Activated naive CD8-positive, alpha-beta T cell treated with anti-CD3 and anti-CD28 coated beads, Interleukin-2, amount 10 ng/mL, durations not matched to agents 7 days and 5 days (primary cell): ENCODE measurements at regions of chr17 and their contacts with region 1.

Region 1: GRCh38 chr17:16537130-16537458 is 31.9 kb downstream of the ZNF287 start:
- DNase-seq: no peak
- ATAC-seq: no peak
- H3K4me3 Mint-ChIP-seq: peak overlapping the region; percentile 98
- H3K27ac Mint-ChIP-seq: peak overlapping the region; percentile 13
- H3K4me1 Mint-ChIP-seq: peaks cover 11% of the 10 kb centered on the region
- H3K27me3 Mint-ChIP-seq: no peaks in the 10 kb centered on the region

Region 2: DNA sequence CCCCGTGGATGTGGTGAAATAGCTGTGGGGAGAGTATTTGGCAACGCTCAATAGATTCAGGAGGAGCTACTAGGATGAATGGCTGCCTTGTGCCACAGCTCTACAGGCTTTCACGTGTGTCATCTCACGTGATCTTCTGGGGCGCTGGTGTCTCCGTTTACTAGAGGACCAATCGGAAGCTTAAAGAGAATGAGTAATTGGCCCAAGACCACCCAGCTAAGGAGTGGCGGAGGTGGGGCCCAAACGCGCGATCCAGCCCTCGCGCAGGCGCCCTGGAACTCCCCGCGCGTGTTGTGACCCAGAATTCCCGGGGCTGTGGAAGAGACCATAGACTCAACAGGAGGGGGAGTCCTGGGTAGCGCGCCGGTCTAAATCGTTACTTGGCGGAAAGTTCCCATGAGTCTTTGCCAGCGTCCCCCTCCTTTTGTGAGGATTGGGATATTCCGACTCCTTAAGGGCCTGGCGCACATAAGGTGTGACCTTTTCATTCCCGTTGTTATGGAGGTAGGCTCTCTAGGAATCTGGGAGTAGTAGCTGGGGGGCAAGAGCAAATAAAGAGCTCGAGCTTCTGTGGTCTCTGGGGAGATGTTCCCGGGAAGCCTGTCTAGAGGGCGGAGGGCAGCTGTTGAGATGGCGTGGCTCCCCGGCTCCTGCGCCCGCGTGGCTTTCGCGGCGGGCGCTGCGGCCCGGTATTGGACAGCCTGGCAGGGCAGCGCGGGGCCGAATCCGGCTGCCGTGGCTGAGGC is 98.4 kb before region 1 on chr17:
- POLR2A ChIA-PET with region 1: interaction called, 14 read pairs
- DNase-seq: peak; percentile 91
- ATAC-seq: peak; percentile 91
- H3K4me3 Mint-ChIP-seq: peak overlapping the region; percentile 99
- H3K27ac Mint-ChIP-seq: peak overlapping the region; percentile 98
- H3K4me1 Mint-ChIP-seq: peaks cover 39% of the 10 kb centered on the region
- H3K27me3 Mint-ChIP-seq: no peaks in the 10 kb centered on the region

Region 3: GRCh38 chr17:16568541-16569357 is 31.7 kb after region 1 on chr17 and contains the start of gene ZNF287:
- POLR2A ChIA-PET with region 1: interaction called, 11 read pairs
- DNase-seq: peak; percentile 91
- ATAC-seq: peak; percentile 97
- H3K4me3 Mint-ChIP-seq: peak within 1 kb of the TSS; percentile 82
- H3K27ac Mint-ChIP-seq: peak within 1 kb of the TSS; percentile 23
- H3K4me1 Mint-ChIP-seq: peaks cover 7% of the 10 kb centered on the region
- H3K27me3 Mint-ChIP-seq: peaks cover 2% of the 10 kb centered on the region
- total RNA-seq, gene ZNF287: 9.7 to 13.0 TPM

Region 4: GRCh38 chr17:16589097-16589969 is 52.2 kb after region 1 on chr17:
- POLR2A ChIA-PET with region 1: interaction called, 11 read pairs
- DNase-seq: peak; percentile 95
- ATAC-seq: peak; percentile 86
- H3K4me3 Mint-ChIP-seq: peak overlapping the region; percentile 69
- H3K27ac Mint-ChIP-seq: peak overlapping the region; percentile 23
- H3K4me1 Mint-ChIP-seq: peaks cover 5% of the 10 kb centered on the region
- H3K27me3 Mint-ChIP-seq: peaks cover 57% of the 10 kb centered on the region

Region 5: DNA sequence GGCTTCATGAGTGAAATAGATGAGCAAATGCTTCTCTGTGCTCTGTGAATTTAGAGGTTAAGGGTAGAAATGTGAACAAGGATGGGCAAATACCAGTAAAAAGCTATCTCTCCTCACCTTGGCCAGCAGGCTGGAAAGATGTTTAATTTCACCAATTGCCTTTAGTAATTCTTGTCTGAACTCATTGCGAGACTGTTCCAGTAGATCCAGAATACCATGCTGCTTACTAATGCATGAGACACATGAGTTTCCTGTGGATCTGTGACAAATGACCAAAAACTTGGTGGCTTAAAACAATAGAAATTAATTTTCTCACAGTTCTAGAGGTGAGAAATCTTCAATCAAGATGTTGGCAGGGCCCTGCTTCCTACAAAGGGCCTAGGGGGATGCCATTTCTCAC is 125.8 kb after region 1 on chr17:
- POLR2A ChIA-PET with region 1: no interaction called
- DNase-seq: no peak
- ATAC-seq: no peak
- H3K4me3 Mint-ChIP-seq: no peak overlapping the region
- H3K27ac Mint-ChIP-seq: no peak overlapping the region
- H3K4me1 Mint-ChIP-seq: no peaks in the 10 kb centered on the region
- H3K27me3 Mint-ChIP-seq: peaks cover 40% of the 10 kb centered on the region